ENCODE measurements at regions of chr15 and their contacts with region 1.

Region 1: DNA sequence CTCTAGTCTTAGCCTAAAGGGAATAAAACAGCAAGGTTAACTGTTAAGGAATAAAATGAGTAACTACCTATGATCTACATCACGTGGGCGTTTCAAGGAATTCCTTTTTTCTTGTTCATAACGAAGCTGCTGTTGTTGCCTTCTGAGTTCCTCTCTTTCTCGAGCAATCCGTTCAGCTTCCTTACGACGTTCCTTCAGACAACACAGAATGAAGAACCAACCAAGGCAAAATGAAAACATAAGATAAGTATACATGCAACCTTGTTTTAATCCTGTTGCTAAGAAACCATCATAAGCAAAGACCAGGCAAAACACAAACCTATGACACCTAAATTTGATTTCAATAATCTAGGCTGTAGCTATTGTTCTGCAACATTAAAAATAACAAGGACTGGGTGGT is 44.1 kb downstream of the SLTM start:
- DNase-seq: no peak
- ATAC-seq: no peak
- H3K4me3 ChIP-seq: no peak overlapping the region
- H3K27ac ChIP-seq: no peak overlapping the region
- H3K4me1 ChIP-seq: no peaks in the 10 kb centered on the region
- H3K27me3 ChIP-seq: no peaks in the 10 kb centered on the region
- CTCF ChIP-seq: no peak
- POLR2A ChIP-seq: no peak
- RAD21 ChIP-seq: no peak

Region 2: DNA sequence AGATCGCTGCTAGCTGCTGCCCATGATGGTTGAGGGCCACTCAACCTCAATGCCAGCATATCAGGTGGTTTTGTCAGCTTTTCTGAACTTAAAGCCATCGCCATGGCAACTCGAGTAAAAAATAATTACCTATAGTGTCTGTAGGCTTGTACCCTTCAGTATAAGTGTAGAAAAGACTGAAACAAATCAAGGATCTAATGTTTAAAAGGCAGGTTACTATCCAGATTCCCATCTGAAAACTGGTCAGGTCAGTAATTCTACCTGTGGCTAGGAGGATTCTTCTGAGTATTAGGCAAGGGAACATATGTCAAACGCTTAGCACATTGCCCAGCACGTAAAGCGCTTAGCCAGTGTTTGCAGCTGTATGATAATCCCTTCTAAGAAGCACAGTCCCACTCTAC is 11.4 kb before region 1 on chr15:
- CTCF ChIA-PET with region 1: no interaction called
- POLR2A ChIA-PET with region 1: no interaction called
- dilution Hi-C with region 1: no loop called
- in situ Hi-C with region 1: no loop called
- intact Hi-C with region 1: loop called (anchors 2 kb)
- DNase-seq: no peak
- ATAC-seq: no peak
- H3K4me3 ChIP-seq: no peak overlapping the region
- H3K27ac ChIP-seq: no peak overlapping the region
- H3K4me1 ChIP-seq: peaks cover 2% of the 10 kb centered on the region; the same call in 1 of the 2 replicates
- H3K27me3 ChIP-seq: no peaks in the 10 kb centered on the region
- CTCF ChIP-seq: no peak
- POLR2A ChIP-seq: no peak
- RAD21 ChIP-seq: no peak

Region 3: DNA sequence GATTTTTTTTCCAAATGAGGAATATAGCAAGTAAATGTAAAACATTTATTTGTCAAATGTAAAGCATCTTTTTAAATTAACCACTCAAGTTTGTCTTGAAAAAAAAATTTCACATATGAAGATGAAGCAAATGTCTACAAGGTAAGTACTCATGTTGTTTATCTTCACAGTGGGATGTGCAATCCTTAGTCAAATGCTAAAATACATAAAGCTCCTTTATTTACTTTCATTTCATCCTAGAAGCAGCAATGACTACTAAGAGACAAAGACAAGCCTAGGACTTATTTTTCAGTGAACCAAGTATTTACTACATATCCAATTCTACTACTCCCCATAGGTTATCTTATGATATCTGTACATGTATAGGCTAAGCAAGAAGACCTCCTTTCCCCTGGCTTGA is 16.9 kb after region 1 on chr15:
- CTCF ChIA-PET with region 1: no interaction called
- POLR2A ChIA-PET with region 1: no interaction called
- dilution Hi-C with region 1: no loop called
- in situ Hi-C with region 1: no loop called
- intact Hi-C with region 1: loop called (anchors 2 kb)
- DNase-seq: peak; percentile 1
- ATAC-seq: no peak
- H3K4me3 ChIP-seq: no peak overlapping the region
- H3K27ac ChIP-seq: no peak overlapping the region
- H3K4me1 ChIP-seq: no peaks in the 10 kb centered on the region
- H3K27me3 ChIP-seq: no peaks in the 10 kb centered on the region
- CTCF ChIP-seq: no peak
- POLR2A ChIP-seq: no peak
- RAD21 ChIP-seq: no peak

Region 4: DNA sequence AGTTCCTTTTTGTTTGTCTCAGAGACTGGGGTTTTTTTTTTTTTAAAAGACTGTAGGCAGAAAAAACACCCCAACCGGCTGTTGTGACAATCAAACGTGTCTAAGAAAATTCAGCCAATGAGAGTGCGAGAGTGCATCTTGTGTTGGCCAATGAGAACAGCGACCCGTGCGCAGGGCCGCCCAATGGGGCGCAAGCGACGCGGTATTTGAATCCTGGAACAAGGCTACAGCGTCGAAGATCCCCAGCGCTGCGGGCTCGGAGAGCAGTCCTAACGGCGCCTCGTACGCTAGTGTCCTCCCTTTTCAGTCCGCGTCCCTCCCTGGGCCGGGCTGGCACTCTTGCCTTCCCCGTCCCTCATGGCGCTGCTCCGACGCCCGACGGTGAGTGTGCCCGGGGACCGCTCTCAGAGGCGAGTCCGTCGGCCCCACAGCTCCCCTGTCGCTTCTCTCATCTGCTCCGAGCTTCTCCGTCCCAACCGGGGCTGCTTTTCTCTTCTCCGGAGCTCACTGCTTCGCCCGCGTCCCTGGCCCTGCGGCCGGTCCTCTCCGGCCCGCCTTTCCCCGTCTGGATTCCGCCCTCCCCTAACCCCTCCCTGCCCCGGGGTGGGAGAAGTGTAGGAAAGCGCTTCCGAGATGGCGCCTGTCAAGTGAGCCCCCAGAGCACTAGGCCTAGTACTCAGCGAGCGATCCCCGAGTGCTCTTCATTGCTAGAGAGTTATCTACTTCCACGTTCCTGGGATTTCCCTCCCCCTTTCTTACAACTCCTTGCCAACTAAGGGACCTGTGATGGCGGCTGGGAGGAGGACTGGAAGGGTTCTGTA is 215.8 kb after region 1 on chr15 and contains the start of gene CCNB2:
- CTCF ChIA-PET with region 1: no interaction called
- POLR2A ChIA-PET with region 1: no interaction called
- dilution Hi-C with region 1: no loop called
- in situ Hi-C with region 1: no loop called
- intact Hi-C with region 1: no loop called
- DNase-seq: peak; percentile 94
- ATAC-seq: peak; percentile 99
- H3K4me3 ChIP-seq: peak within 1 kb of the TSS; percentile 77
- H3K27ac ChIP-seq: peak within 1 kb of the TSS; percentile 65
- H3K4me1 ChIP-seq: no peaks in the 10 kb centered on the region
- H3K27me3 ChIP-seq: no peaks in the 10 kb centered on the region
- CTCF ChIP-seq: no peak
- POLR2A ChIP-seq: peak; percentile 59; the same call in 1 of the 2 replicates
- RAD21 ChIP-seq: no peak
- total RNA-seq, gene CCNB2: 52.5 and 57.2 TPM in 2 replicates

Measured in IMR-90 (cell line).